SK-N-SH (cell line): ENCODE measurements at regions of chr20 and their contacts with region 1.

Region 1: GRCh38 chr20:54062812-54063280 is 7.5 kb downstream of the BCAS1 start:
- DNase-seq: peak; percentile 66
- H3K4me3 ChIP-seq: no peak overlapping the region; a peak in 1 of 4 replicates
- H3K27ac ChIP-seq: no peak overlapping the region
- H3K4me1 ChIP-seq: no peaks in the 10 kb centered on the region; a peak in 2 of 4 replicates
- H3K27me3 ChIP-seq: no peaks in the 10 kb centered on the region
- CTCF ChIP-seq: peak; percentile 67
- EP300 ChIP-seq: no peak
- RAD21 ChIP-seq: peak; percentile 90

Region 2: GRCh38 chr20:53809183-53809582 is 253.7 kb before region 1 on chr20:
- CTCF ChIA-PET with region 1: no interaction called
- POLR2A ChIA-PET with region 1: no interaction called
- DNase-seq: no peak
- H3K4me3 ChIP-seq: no peak overlapping the region
- H3K27ac ChIP-seq: peak overlapping the region in 1 of 2 experiments; percentile 33; a peak in 1 of 4 replicates
- H3K4me1 ChIP-seq: peaks cover 0 to 14% of the 10 kb centered on the region in 2 experiments; a peak in 1 of 4 replicates
- H3K27me3 ChIP-seq: no peaks in the 10 kb centered on the region
- CTCF ChIP-seq: no peak
- EP300 ChIP-seq: no peak
- RAD21 ChIP-seq: no peak

Region 3: GRCh38 chr20:53934421-53935343 is 128.2 kb before region 1 on chr20:
- CTCF ChIA-PET with region 1: interaction called, 12 read pairs
- POLR2A ChIA-PET with region 1: interaction called, 5 read pairs
- DNase-seq: no peak
- H3K4me3 ChIP-seq: no peak overlapping the region
- H3K27ac ChIP-seq: peak overlapping the region in 1 of 2 experiments; percentile 33; a peak in 2 of 4 replicates
- H3K4me1 ChIP-seq: peaks cover 0 to 23% of the 10 kb centered on the region in 2 experiments; a peak in 3 of 4 replicates
- H3K27me3 ChIP-seq: no peaks in the 10 kb centered on the region
- CTCF ChIP-seq: no peak
- EP300 ChIP-seq: no peak
- RAD21 ChIP-seq: no peak

Region 4: GRCh38 chr20:54093423-54094267 is 30.8 kb after region 1 on chr20:
- CTCF ChIA-PET with region 1: no interaction called
- POLR2A ChIA-PET with region 1: no interaction called
- DNase-seq: no peak
- H3K4me3 ChIP-seq: no peak overlapping the region
- H3K27ac ChIP-seq: no peak overlapping the region
- H3K4me1 ChIP-seq: peaks cover 0 to 3% of the 10 kb centered on the region in 2 experiments; a peak in 1 of 4 replicates
- H3K27me3 ChIP-seq: no peaks in the 10 kb centered on the region; the same call in 1 of the 2 replicates
- CTCF ChIP-seq: no peak
- EP300 ChIP-seq: no peak
- RAD21 ChIP-seq: no peak

Region 5: GRCh38 chr20:54123587-54124180 is 60.8 kb after region 1 on chr20:
- CTCF ChIA-PET with region 1: no interaction called
- POLR2A ChIA-PET with region 1: no interaction called
- DNase-seq: no peak
- H3K4me3 ChIP-seq: no peak overlapping the region
- H3K27ac ChIP-seq: peak overlapping the region in 1 of 2 experiments; percentile 79; a peak in 2 of 4 replicates
- H3K4me1 ChIP-seq: 0 out of 4 replicates have a peak, but pooled peaks cover 0 to 6% of the 10 kb centered on the region in 2 experiments
- H3K27me3 ChIP-seq: no peaks in the 10 kb centered on the region
- CTCF ChIP-seq: no peak
- EP300 ChIP-seq: no peak
- RAD21 ChIP-seq: no peak